Calu3 (cell line): ENCODE measurements at regions of chr17 and their contacts with region 1.

Region 1: GRCh38 chr17:37489197-37490001 is at the start of gene DUSP14:
- DNase-seq: peak; percentile 99
- H3K4me3 Mint-ChIP-seq: peak within 1 kb of the TSS; percentile 79
- H3K27ac Mint-ChIP-seq: peak within 1 kb of the TSS; percentile 72
- H3K4me1 Mint-ChIP-seq: peaks cover 50% of the 10 kb centered on the region
- H3K27me3 Mint-ChIP-seq: no peaks in the 10 kb centered on the region
- CTCF ChIP-seq: no peak
- total RNA-seq, gene DUSP14: 75.2 and 77.6 TPM in 2 replicates

Region 2: DNA sequence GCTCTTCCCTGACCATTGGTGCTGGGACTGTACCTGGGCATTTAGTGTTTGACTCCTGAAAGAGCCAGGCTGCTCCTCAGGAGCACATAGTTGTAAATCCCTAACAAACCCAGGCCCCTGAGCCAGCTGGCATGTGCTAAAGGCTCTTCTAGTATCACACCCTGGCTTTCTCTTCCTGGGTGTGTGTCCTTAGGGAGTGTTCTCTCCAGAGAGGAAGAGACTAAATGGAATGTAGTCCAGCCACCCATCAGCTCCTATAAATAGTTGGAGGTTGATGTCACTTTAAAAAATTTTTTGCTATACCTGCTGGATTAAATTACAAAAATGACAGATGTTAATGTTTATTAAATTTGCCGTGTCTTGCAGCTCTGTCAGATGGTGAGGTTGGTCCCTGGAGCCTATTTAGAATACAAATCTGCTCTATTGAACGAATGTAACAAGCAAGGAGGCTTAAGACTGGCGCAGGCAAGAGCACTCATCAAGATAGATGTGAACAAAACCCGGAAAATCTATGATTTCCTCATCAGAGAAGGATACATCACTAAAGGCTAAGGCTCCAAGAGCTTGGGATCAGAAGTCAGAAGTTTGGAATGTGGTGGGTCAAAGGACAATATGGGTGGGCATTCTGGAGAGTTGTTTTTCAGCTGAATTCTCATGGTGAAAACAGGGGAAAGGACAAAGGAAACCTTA is 12.8 kb before region 1 on chr17:
- CTCF ChIA-PET with region 1: interaction called, 12 read pairs
- intact Hi-C with region 1: no loop called
- DNase-seq: peak; percentile 50
- H3K4me3 Mint-ChIP-seq: no peak overlapping the region
- H3K27ac Mint-ChIP-seq: peak overlapping the region; percentile 34
- H3K4me1 Mint-ChIP-seq: peaks cover 21% of the 10 kb centered on the region
- H3K27me3 Mint-ChIP-seq: no peaks in the 10 kb centered on the region
- CTCF ChIP-seq: no peak